Calu3 (cell line): ENCODE measurements at regions of chr4 and their contacts with region 1.

Region 1: GRCh38 chr4:94534401-94535312 is 82.9 kb downstream of the PDLIM5 start:
- DNase-seq: no peak
- H3K4me3 Mint-ChIP-seq: peak overlapping the region; percentile 57
- H3K27ac Mint-ChIP-seq: peak overlapping the region; percentile 96
- H3K4me1 Mint-ChIP-seq: peaks cover 71% of the 10 kb centered on the region
- H3K27me3 Mint-ChIP-seq: no peaks in the 10 kb centered on the region
- CTCF ChIP-seq: no peak

Region 2: GRCh38 chr4:94274912-94275311 is 259.7 kb before region 1 on chr4:
- CTCF ChIA-PET with region 1: no interaction called
- intact Hi-C with region 1: no loop called
- DNase-seq: no peak
- H3K4me3 Mint-ChIP-seq: no peak overlapping the region
- H3K27ac Mint-ChIP-seq: no peak overlapping the region
- H3K4me1 Mint-ChIP-seq: peaks cover 12% of the 10 kb centered on the region
- H3K27me3 Mint-ChIP-seq: no peaks in the 10 kb centered on the region
- CTCF ChIP-seq: no peak

Region 3: GRCh38 chr4:94446386-94446785 is 88.3 kb before region 1 on chr4:
- CTCF ChIA-PET with region 1: no interaction called
- intact Hi-C with region 1: no loop called
- DNase-seq: no peak
- H3K4me3 Mint-ChIP-seq: no peak overlapping the region
- H3K27ac Mint-ChIP-seq: no peak overlapping the region
- H3K4me1 Mint-ChIP-seq: peaks cover 23% of the 10 kb centered on the region
- H3K27me3 Mint-ChIP-seq: no peaks in the 10 kb centered on the region
- CTCF ChIP-seq: no peak

Region 4: GRCh38 chr4:94457692-94458106 is 77.0 kb before region 1 on chr4:
- CTCF ChIA-PET with region 1: no interaction called
- intact Hi-C with region 1: no loop called
- DNase-seq: no peak
- H3K4me3 Mint-ChIP-seq: peak overlapping the region; percentile 42
- H3K27ac Mint-ChIP-seq: no peak overlapping the region
- H3K4me1 Mint-ChIP-seq: peaks cover 40% of the 10 kb centered on the region
- H3K27me3 Mint-ChIP-seq: no peaks in the 10 kb centered on the region
- CTCF ChIP-seq: no peak

Region 5: DNA sequence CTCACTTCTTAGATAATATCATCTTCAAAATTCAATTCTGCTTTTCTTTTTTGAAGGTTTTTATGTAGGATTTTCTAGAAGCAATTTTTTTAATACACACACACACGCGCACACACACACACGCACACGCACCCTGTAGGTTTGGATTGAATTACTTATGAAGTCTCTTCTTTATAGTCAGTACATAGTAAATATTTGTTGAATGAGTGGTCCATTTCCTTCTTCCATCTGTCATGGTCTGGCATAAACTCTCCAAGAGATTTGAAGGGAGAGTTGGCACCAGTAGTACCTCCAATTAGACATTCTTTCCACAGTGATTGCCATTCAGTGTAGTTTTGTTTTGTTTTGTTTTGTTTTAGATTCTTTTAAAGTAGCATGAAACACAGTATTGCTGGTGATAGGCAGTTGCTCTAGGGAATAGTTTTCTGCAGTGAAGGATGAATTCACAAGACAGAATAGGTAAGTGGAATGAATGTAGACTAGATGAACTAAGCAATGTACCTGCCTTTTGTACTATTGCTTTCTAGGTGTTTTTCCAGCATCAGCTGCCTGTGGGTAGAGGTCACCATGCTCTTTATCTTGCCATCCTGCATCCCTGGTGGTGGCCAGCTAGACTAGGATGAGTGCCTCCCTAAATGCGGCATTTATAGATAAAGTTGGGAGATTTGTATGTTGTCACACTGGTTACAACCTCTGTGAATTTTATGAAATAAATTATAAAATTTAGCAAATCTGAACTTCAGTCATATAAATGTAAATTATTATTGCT is 62.4 kb before region 1 on chr4:
- CTCF ChIA-PET with region 1: no interaction called
- intact Hi-C with region 1: loop called (anchors 5 kb)
- DNase-seq: no peak
- H3K4me3 Mint-ChIP-seq: peak overlapping the region; percentile 57
- H3K27ac Mint-ChIP-seq: peak overlapping the region; percentile 60
- H3K4me1 Mint-ChIP-seq: peaks cover 44% of the 10 kb centered on the region
- H3K27me3 Mint-ChIP-seq: no peaks in the 10 kb centered on the region
- CTCF ChIP-seq: no peak

Region 6: DNA sequence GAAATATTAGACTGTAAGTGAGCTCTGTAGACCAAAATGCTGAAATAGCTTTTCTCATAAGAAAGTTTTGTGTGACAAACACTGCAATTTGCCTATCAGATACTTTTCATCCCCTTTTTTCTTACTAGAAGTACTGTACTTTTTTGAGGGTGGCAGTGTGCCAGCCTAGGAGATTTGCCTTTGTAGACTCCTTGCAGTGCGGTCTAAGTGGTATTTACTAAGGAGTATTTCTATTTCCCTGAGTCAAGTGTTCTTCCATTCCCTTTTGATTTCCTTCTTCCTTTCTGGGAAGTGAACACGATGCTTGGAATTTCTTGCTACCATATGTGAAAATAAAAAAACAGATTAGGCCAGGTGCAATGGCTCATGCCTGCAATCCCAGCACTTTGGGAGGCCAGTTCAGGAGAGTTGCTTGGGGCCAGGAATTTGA is 48.3 kb before region 1 on chr4:
- CTCF ChIA-PET with region 1: no interaction called
- intact Hi-C with region 1: loop called (anchors 2 kb)
- DNase-seq: peak; percentile 18
- H3K4me3 Mint-ChIP-seq: no peak overlapping the region
- H3K27ac Mint-ChIP-seq: no peak overlapping the region
- H3K4me1 Mint-ChIP-seq: peaks cover 14% of the 10 kb centered on the region
- H3K27me3 Mint-ChIP-seq: no peaks in the 10 kb centered on the region
- CTCF ChIP-seq: no peak